IMR-90 (cell line): ENCODE measurements at regions of chr6 and their contacts with region 1.

Region 1: DNA sequence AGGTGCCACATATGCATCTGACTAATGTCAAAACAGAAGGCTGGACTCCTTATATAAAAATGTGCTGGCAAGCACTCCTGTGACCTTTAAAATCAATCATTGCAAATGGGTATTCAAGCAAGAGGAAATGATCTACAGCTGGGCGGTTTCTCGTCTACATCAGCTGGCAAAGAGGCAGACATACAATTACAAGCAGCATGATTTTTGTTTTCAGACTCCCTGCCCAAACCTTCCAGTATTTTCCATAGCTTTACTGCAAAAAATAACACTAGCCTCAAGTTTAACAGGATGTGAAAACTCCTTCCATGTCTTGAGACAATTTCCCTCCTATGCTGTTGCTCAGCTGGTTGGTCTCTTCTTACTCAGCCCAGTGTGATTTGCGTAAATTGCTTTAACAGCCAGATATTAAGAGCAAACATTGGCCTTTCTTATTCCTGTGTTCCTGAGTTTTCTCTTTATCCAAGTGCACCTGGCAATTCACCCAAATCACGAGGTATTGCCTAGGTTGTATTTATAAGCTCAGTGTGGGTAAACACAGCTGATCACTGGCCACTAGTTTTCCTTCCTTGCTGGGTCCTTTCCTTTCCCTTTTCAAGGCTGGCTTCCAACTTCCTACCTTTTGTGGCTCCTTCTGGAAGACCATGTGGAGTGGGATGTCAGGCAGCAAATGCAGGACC is 130.4 kb downstream of the MOXD1 start:
- DNase-seq: no peak
- ATAC-seq: no peak
- H3K4me3 ChIP-seq: no peak overlapping the region
- H3K27ac ChIP-seq: no peak overlapping the region
- H3K4me1 ChIP-seq: no peaks in the 10 kb centered on the region
- H3K27me3 ChIP-seq: no peaks in the 10 kb centered on the region; the same call in 1 of the 2 replicates
- CTCF ChIP-seq: no peak
- POLR2A ChIP-seq: no peak
- RAD21 ChIP-seq: no peak

Region 2: DNA sequence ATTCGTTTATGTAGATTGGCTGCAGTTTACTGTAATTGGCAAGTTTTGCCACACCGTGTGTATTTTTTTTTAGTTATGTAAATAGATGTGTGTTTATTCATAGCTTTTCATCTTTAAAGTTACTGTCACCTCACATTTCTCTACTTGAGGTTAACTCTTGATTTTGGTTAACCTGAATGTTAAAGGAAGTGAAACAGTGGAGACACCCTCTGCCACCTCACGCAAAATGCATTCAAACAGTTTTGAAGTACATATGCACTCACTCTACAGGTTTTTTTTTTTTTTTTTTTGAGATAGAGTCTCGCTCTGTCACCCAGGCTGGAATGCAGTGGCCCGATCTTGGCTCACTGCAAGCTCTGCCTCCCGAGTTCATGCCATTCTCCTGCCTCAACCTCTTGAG is 587.4 kb before region 1 on chr6:
- CTCF ChIA-PET with region 1: no interaction called
- POLR2A ChIA-PET with region 1: no interaction called
- dilution Hi-C with region 1: no loop called
- in situ Hi-C with region 1: no loop called
- intact Hi-C with region 1: loop called (anchors 5 kb)
- DNase-seq: no peak
- ATAC-seq: no peak
- H3K4me3 ChIP-seq: no peak overlapping the region
- H3K27ac ChIP-seq: no peak overlapping the region
- H3K4me1 ChIP-seq: no peaks in the 10 kb centered on the region
- H3K27me3 ChIP-seq: peaks cover 3% of the 10 kb centered on the region
- CTCF ChIP-seq: no peak
- POLR2A ChIP-seq: no peak
- RAD21 ChIP-seq: no peak

Region 3: DNA sequence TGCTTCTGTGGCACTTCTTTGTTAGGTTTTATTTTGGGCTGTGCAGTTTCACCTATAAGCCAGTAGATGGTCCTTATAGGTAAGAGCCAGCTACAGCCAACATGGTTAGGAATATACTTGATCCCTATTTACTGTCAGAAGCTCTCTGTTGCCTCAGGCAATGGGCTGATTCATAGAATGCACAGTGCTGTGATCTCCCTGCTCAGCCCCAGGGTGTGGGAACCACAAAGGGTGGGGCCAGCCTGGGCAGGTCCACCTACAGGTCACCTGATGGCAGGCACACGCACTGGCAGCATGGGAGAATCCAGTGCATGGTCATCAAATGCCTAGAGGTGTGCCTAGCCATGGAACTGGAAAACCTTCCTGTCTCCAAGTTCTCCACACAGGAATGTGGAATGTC is 61.5 kb before region 1 on chr6:
- CTCF ChIA-PET with region 1: no interaction called
- POLR2A ChIA-PET with region 1: no interaction called
- dilution Hi-C with region 1: no loop called
- in situ Hi-C with region 1: no loop called
- intact Hi-C with region 1: no loop called
- DNase-seq: no peak
- ATAC-seq: no peak
- H3K4me3 ChIP-seq: no peak overlapping the region
- H3K27ac ChIP-seq: no peak overlapping the region
- H3K4me1 ChIP-seq: peaks cover 4% of the 10 kb centered on the region; the same call in 1 of the 2 replicates
- H3K27me3 ChIP-seq: no peaks in the 10 kb centered on the region
- CTCF ChIP-seq: no peak
- POLR2A ChIP-seq: no peak
- RAD21 ChIP-seq: no peak

Region 4: GRCh38 chr6:132286026-132287019 is 15.5 kb after region 1 on chr6:
- CTCF ChIA-PET with region 1: no interaction called
- POLR2A ChIA-PET with region 1: no interaction called
- dilution Hi-C with region 1: no loop called
- in situ Hi-C with region 1: no loop called
- intact Hi-C with region 1: no loop called
- DNase-seq: no peak
- ATAC-seq: no peak
- H3K4me3 ChIP-seq: no peak overlapping the region
- H3K27ac ChIP-seq: no peak overlapping the region
- H3K4me1 ChIP-seq: no peaks in the 10 kb centered on the region
- H3K27me3 ChIP-seq: no peaks in the 10 kb centered on the region; the same call in 1 of the 2 replicates
- CTCF ChIP-seq: no peak
- POLR2A ChIP-seq: no peak
- RAD21 ChIP-seq: no peak